Motor neuron (in vitro differentiated cells): ENCODE measurements at regions of chr12 and their contacts with region 1.

Region 1: GRCh38 chr12:75814851-75815754 is 216.5 kb downstream of the PHLDA1 start:
- ATAC-seq: peak; percentile 77 to 91 (median 84)
- H3K4me3 ChIP-seq: no peak overlapping the region
- H3K27ac ChIP-seq: peak overlapping the region; percentile 27 to 82
- H3K4me1 ChIP-seq: peaks cover 45 to 58% of the 10 kb centered on the region in 2 donors

Region 2: GRCh38 chr12:75526655-75527511 is 288.2 kb before region 1 on chr12:
- in situ Hi-C with region 1: loop called in 1 of 9 experiments (anchors 25 kb)
- ATAC-seq: peak; percentile 49 to 80 (median 78)
- H3K4me3 ChIP-seq: no peak overlapping the region
- H3K27ac ChIP-seq: no peak overlapping the region
- H3K4me1 ChIP-seq: peaks cover 4 to 9% of the 10 kb centered on the region in 2 donors